Adrenal gland (tissue), 19 donors: ENCODE measurements at regions of chr17 and their contacts with region 1.

Region 1: DNA sequence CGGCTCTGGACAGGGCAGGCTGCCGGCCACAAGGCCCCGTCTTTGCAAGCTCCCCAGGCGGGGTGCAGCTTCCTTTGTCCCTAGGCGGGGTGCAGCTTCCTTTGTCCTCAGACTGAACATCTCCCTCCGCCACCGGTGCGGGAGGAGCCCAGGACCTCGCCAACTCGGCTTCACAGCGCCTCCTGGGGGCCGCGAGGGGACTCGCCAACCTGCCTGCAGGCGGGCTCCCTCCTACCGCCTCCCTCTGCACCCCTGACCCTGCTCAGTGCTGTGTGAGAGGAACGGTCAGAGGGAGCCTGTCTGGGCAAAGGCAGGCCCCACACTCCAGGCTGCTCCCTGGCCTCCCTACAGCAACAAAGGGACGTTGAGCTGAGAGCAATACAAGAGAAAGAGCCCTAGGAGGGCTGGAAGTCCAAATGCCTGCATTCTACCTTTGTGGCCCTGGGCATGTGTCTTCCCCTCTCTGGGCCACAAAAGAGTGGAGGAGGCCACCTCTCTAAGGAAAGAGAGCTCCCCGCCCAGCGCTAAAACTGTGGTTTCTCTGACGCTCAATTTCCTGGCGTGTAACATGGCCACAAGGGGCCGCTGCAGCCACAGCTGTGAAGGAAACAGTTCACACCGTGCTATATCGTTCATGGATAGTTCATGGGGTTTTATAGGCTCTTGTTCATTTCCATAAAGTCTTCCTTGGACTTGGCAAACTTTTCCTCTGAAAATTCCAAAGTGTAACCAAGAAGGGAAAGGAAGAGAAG is 20.9 kb upstream of the KRT19 start:
- DNase-seq: peak; percentile 79 to 93 (median 84)
- H3K4me3 ChIP-seq: peak overlapping the region in 1 of 4 donors; percentile 26
- H3K27ac ChIP-seq: peak overlapping the region in 3 of 5 donors; percentile 37 to 72 (median 57)
- H3K4me1 ChIP-seq: peaks cover 15 to 19% of the 10 kb centered on the region in 2 donors
- H3K27me3 ChIP-seq: no peaks in the 10 kb centered on the region
- CTCF ChIP-seq: peak; percentile 61 to 96 (median 84)
- POLR2A ChIP-seq: no peak

Region 2: DNA sequence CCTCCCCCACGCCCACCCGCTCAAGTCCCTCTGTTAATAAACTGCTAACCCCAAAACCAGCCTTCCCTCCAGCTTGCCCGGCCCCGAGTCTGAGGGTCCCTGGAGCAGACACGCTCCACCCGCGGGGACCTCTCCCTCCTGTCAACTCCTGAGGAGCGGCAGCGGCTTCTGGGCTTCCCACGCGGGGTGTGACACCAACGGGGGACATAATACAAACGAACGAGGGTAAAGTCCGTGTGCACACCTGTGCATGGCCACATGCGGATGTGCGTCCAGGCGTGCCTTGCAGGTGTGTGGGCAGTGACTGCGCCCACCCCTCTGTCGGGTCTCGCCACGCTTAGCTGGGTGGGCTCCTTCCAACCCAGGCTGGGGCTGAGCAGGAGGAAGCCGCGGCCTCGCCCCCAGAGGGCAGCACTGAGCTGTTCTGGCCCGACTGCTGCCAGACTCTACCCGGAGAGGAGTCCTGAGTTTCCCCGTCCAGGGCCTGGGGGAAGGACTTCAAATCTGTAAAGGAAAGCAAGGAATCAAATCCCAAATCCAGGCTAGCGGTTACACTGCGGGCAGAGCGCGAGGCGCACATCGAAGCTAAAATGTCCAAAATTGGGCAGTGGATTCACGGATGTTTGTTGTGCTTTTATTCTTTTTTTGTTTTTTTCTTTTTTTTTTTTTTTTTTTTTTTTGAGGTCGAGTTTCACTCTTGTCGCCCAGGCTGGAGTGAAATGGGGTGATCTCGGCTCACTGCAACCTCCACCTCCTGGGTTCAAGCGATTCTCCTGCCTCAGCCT is 99.6 kb after region 1 on chr17:
- intact Hi-C with region 1: loop called in 1 of 2 experiments (anchors 2 kb)
- DNase-seq: peak; percentile 78 to 90 (median 86)
- H3K4me3 ChIP-seq: peak overlapping the region in 2 of 4 donors; percentile 15 to 49
- H3K27ac ChIP-seq: peak overlapping the region in 1 of 5 donors; percentile 60
- H3K4me1 ChIP-seq: peaks cover 7 to 17% of the 10 kb centered on the region in 2 donors
- H3K27me3 ChIP-seq: no peaks in the 10 kb centered on the region
- CTCF ChIP-seq: peak; percentile 82 to 95 (median 90)
- POLR2A ChIP-seq: no peak

Region 3: GRCh38 chr17:41688699-41689496 is 139.9 kb after region 1 on chr17 and contains the start of gene EIF1:
- intact Hi-C with region 1: no loop called
- DNase-seq: peak; percentile 100
- H3K4me3 ChIP-seq: peak within 1 kb of the TSS; percentile 74 to 100 (median 94)
- H3K27ac ChIP-seq: peak within 1 kb of the TSS; percentile 100
- H3K4me1 ChIP-seq: peaks cover 13 to 34% of the 10 kb centered on the region in 2 donors
- H3K27me3 ChIP-seq: no peaks in the 10 kb centered on the region
- CTCF ChIP-seq: peak in 1 of 6 experiments; percentile 17
- POLR2A ChIP-seq: peak; percentile 100
- total RNA-seq, gene EIF1: 105 to 1,189 (median 176) TPM